Astrocyte of the cerebellum (primary cell): ENCODE measurements at regions of chr7 and their contacts with region 1.

Region 1: DNA sequence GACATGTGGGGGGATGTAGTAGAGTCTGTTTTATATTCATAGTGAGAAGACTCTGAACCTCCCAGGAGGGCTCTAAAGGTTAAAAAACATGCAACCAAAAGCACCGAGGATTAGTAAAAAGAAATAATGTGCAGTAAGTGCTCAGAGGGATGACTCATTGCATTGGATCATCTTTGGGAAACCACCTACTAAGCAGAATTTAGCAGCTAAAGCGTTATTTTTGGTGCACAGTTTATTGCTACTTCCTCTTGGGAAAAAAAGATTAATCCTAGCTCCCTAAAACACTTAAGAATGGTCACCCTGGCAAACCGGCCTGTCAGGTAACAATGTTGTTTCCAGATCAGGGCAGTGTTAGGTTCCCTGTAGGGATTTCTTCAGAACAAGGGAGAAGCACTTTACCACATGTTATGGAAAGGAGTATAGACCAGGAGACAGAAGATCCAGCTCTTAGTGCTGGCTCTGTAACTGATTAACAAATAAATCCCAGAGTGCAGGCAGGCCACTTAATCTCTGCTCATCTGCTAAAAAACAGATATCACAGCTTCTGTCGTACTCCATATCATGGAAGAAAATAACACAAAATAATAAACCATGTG is 44.8 kb upstream of the FAM133B start:
- DNase-seq: peak; percentile 63
- H3K4me3 ChIP-seq: no peak overlapping the region
- CTCF ChIP-seq: no peak

Region 2: DNA sequence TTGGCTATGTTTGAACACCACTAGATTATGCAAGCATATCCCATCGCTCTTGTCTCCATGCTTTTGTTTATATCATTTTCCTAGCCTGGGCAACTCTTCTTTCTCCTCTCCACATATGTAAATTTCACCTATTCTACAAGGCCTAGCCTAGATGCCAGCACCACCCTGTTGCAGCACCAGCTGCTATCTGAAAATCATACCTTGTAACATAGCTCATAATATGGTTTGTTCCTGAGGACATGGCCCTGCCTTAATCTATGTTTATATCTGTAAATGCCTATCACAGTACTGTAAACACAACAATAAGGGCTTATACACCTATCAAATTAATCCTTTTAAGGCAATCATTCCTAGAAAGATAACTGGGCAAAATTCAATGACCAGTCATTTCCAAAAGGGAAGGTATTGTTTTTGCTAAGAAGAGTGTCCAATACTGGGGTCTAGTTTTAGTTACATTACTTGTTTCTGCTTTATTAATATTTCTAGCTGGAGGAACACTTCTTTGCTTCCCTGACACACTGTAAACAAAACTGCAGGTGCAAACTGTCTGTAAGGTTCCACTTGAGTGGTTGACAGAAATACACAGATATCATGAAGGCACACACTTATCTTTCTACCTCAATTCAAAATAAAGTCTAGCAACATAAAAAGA is 39.2 kb after region 1 on chr7:
- in situ Hi-C with region 1: no loop called
- DNase-seq: no peak
- H3K4me3 ChIP-seq: no peak overlapping the region
- CTCF ChIP-seq: no peak

Region 3: DNA sequence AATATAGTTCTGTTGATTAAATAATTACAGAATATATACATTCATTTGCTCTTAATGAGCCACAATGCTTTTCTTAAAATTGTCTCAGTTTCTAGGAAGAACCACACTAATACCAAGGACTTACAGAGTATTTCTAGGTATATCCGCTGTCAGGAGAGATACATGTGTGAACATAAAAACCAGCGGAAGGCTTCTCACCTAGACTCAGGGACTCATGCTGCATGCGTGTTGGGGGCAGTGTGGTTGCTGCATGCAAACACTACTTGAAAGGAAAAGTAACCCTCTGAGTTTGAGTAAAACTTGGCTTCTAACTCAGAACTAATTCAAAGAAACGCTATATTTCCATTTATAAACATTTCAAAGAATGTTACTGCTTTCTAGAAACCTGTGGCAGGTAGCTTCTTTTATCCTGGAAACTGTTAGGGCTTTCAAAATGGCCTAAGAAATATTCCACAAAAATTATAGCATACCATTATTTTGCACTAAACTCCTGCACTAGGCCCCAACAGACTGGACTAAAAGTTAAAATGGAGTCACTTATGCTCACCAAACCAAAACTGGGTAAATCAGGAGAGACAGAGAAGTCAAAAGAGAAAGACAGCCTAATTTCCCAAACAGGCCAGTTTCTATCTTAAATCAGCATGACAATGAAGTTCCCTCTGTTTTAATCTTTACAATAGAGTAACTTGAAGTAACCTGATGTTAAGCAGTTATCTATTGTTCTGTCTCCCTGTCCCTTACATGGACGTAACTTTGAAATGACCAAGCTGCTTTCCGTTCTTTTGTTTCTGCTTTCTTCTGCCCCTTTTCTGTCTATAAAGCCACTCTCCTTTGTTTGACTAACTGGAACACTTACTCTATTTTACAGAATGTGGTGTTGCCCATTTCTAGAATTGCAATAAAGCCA is 50.4 kb after region 1 on chr7:
- in situ Hi-C with region 1: loop called (anchors 5 kb)
- DNase-seq: no peak
- H3K4me3 ChIP-seq: no peak overlapping the region
- CTCF ChIP-seq: no peak

Region 4: DNA sequence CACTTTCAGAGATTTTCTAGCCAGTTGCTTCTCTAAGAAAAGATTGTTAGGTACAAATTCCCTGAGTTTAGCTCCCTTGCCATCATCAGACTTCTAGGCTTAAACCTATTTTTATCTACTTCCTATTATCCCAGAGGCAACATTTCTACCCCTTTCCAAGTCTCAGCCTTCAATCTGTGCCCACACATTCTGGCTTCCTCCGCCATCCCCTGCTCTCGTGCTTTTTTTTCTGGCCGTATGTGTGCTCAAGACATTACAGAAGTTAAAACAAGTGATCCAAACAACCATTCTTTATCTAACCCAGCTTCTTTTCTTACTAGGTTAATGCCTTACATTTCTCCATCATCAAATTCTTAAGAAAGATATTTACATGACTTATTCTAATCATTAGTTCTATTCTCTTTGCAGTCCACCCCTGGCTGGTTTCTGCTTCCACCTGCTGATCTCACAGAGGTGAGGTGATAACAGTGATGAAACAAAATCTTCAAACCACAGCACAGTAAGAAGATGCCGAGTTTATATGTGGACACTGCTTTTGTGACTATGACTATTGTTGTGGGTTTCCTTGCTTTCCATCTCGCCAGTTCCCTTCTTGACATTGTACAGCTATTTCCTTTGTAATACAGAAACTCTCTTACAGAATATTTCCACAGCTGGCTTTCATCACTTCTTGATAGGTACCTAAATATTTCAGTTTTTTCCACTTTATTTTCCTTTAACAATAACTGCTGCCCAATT is 219.6 kb after region 1 on chr7:
- in situ Hi-C with region 1: no loop called
- DNase-seq: no peak
- H3K4me3 ChIP-seq: no peak overlapping the region
- CTCF ChIP-seq: no peak